Endothelial cell of umbilical vein (primary cell): ENCODE measurements at regions of chr14 and their contacts with region 1.

Region 1: GRCh38 chr14:89040460-89041259 is 216.2 kb downstream of the TTC8 start:
- DNase-seq: peak; percentile 88
- H3K4me3 ChIP-seq: peak overlapping the region in 2 of 3 experiments; percentile 34 to 49
- H3K27ac ChIP-seq: peak overlapping the region; percentile 83
- H3K4me1 ChIP-seq: peaks cover 9% of the 10 kb centered on the region
- H3K27me3 ChIP-seq: peaks cover 0 to 9% of the 10 kb centered on the region in 2 experiments
- CTCF ChIP-seq: peak; percentile 96 to 99
- POLR2A ChIP-seq: no peak

Region 2: DNA sequence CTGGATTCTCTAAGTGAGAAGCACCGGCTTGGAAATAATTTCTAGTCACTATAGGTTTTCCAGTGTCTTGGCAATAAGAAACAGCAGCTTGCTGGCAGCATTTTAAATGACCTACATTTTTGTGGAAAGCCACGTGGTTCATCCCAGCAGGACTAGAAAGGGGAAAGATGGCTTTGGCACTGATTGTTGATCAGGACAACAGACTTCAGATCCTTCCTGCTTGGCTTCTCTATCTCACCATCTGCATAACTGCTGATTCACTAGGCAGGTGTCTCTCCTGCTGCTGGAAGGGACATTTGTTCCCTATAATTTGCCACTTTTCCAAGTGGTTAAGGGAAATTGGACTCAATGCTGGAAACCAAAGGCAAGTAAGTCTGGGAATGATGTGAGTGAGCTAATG is 85.2 kb before region 1 on chr14:
- CTCF ChIA-PET with region 1: no interaction called
- POLR2A ChIA-PET with region 1: no interaction called
- dilution Hi-C with region 1: no loop called
- intact Hi-C with region 1: no loop called
- DNase-seq: no peak
- H3K4me3 ChIP-seq: no peak overlapping the region
- H3K27ac ChIP-seq: no peak overlapping the region
- H3K4me1 ChIP-seq: no peaks in the 10 kb centered on the region
- H3K27me3 ChIP-seq: no peaks in the 10 kb centered on the region
- CTCF ChIP-seq: no peak
- POLR2A ChIP-seq: no peak

Region 3: GRCh38 chr14:89178802-89179535 is 138.3 kb after region 1 on chr14:
- CTCF ChIA-PET with region 1: interaction called, 6 read pairs
- POLR2A ChIA-PET with region 1: no interaction called
- dilution Hi-C with region 1: no loop called
- intact Hi-C with region 1: loop called (anchors 2 kb)
- DNase-seq: no peak
- H3K4me3 ChIP-seq: no peak overlapping the region
- H3K27ac ChIP-seq: no peak overlapping the region
- H3K4me1 ChIP-seq: no peaks in the 10 kb centered on the region
- H3K27me3 ChIP-seq: no peaks in the 10 kb centered on the region
- CTCF ChIP-seq: no peak
- POLR2A ChIP-seq: no peak

Region 4: DNA sequence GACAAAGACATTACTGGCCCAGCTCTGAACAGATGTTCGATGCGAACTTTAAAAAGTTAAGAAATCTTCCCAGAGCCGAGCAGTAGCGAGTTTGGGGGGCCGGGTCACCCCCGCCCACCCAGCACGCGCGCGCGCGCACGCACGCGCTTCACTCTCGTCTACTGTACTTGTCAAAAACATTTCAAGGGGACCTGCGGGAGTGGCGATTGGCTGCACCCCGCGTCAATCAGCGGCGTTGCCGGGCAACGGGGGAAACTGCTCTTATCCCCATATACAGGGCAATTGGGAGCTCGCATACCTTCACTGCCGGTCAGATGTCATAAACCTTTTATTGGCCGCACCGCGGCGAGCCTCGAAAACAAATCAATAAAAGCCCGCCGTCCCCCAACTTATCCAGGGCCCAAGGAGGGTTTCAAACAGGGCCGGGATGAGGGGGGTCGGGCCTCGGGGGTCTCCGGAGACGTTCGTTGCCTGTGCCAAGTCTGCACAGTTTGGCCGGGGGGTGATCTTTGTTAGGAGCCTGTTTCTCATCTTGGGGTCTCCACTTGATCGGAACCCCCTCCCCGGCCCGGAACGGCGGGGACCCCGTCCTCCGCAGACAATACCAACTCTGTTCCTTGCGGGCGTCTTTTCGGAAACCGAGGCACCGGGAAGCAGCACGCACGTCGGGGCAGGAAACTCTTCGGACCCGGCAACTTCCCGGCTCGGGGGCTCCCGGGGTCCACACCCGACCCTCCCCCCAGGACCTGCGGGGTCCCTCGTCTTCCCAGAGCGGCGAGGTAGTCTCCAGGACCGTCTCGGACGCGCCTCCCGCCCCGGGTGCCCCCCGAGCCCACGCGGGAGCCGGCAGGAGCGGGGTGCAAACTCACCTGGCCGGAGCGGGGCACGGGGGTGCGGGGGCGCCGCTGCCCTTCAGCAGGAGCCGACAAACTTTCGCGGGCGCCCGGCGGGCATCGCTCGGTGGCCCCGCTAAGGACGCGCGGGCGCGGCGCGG is 375.6 kb after region 1 on chr14:
- CTCF ChIA-PET with region 1: no interaction called
- POLR2A ChIA-PET with region 1: no interaction called
- dilution Hi-C with region 1: no loop called
- intact Hi-C with region 1: loop called (anchors 1 kb)
- DNase-seq: peak; percentile 99
- H3K4me3 ChIP-seq: peak overlapping the region; percentile 55 to 78 (median 68)
- H3K27ac ChIP-seq: peak overlapping the region; percentile 65
- H3K4me1 ChIP-seq: peaks cover 6% of the 10 kb centered on the region
- H3K27me3 ChIP-seq: no peaks in the 10 kb centered on the region
- CTCF ChIP-seq: no peak
- POLR2A ChIP-seq: no peak

Region 5: DNA sequence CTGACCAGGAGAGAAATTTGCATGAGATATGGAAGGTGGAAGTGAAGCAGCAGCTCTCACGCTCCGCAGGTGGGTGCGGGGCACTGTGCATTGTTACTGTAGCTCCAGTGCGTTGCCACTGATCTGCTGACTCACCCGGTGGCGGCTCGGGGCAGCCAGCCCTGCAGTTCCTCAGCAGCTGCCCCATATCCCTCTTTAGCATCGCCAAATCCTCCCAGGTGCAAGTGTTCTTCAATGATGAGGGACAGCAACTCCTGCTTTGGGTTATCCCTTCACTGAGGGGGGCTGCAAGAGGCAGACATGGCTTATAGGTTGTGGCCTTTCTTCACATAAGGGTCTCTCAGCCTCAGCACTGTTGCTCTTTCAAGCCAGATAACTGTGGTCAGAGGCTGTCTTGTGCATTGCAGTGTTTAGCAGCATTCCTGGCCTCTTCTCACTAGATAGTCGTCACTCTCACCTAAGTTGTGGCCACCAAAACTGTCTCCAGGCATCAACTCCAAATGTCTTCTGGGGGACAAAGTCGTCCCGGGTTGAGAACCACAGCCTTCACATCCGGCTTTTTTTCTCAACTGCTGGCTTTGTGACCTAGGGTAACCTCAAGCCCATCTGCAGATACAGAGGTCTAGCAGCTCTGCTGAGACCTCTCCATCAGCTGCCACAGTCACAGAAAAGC is 733.1 kb after region 1 on chr14:
- CTCF ChIA-PET with region 1: interaction called, 14 read pairs
- POLR2A ChIA-PET with region 1: no interaction called
- dilution Hi-C with region 1: no loop called
- intact Hi-C with region 1: no loop called
- DNase-seq: peak; percentile 12
- H3K4me3 ChIP-seq: no peak overlapping the region
- H3K27ac ChIP-seq: no peak overlapping the region
- H3K4me1 ChIP-seq: peaks cover 34% of the 10 kb centered on the region
- H3K27me3 ChIP-seq: no peaks in the 10 kb centered on the region
- CTCF ChIP-seq: no peak
- POLR2A ChIP-seq: no peak

Region 6: DNA sequence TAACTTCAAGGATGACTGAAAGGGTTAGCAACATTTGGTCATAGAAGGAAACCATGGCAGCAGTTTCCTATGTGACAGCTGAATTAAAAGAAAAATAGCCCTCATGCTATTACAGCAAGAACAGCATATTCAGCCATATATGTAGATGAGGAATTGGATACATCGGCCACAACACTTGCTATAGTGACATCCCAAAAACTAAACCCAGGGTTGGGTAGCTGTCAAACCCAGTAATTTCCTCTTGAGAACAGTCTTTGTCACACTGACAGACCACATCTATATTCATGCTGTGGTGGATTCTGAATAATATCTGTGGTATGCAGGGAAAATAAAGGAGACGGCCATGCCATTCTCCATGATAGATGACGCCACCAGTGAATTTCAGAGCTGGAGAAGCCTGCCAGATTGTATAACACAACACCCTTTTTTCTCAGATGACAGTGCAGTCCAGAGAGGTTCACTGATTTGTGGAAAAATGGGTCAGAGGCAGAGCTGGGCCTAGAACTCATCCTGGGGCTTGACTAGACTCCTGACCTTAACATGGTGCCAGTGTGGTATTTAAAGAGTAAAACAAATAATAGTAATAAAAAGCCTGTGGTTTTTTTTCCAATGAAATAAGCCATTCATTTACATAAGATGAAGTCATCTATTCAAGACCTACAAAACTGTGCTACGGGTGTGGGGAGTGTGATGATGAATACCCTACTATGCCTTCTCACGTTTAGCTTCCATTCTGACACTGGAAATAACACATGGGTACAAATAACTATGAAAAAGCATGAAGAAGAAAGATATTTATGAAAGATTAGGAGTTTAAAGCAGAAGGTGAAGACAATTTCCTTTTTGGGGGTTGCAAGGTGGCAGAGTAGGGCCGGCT is 881.6 kb after region 1 on chr14:
- CTCF ChIA-PET with region 1: interaction called, 13 read pairs
- POLR2A ChIA-PET with region 1: no interaction called
- dilution Hi-C with region 1: no loop called
- intact Hi-C with region 1: no loop called
- DNase-seq: no peak
- H3K4me3 ChIP-seq: no peak overlapping the region
- H3K27ac ChIP-seq: peak overlapping the region; percentile 49
- H3K4me1 ChIP-seq: peaks cover 23% of the 10 kb centered on the region
- H3K27me3 ChIP-seq: no peaks in the 10 kb centered on the region
- CTCF ChIP-seq: no peak
- POLR2A ChIP-seq: no peak

Region 7: GRCh38 chr14:90049390-90049789 is 1008.7 kb after region 1 on chr14:
- CTCF ChIA-PET with region 1: no interaction called
- POLR2A ChIA-PET with region 1: no interaction called
- dilution Hi-C with region 1: no loop called
- intact Hi-C with region 1: loop called (anchors 5 kb)
- DNase-seq: no peak
- H3K4me3 ChIP-seq: no peak overlapping the region
- H3K27ac ChIP-seq: no peak overlapping the region
- H3K4me1 ChIP-seq: no peaks in the 10 kb centered on the region
- H3K27me3 ChIP-seq: peaks cover 9 to 10% of the 10 kb centered on the region in 2 experiments
- CTCF ChIP-seq: no peak
- POLR2A ChIP-seq: no peak